Activated CD4-positive, alpha-beta T cell treated with anti-CD3 and anti-CD28 coated beads, Interleukin-2, amount 10 ng/mL, durations not matched to agents 7 days and 5 days (primary cell): ENCODE measurements at regions of chr1 and their contacts with region 1.

Region 1: GRCh38 chr1:42833981-42834380 is 12.4 kb upstream of the ZNF691 start:
- DNase-seq: no peak
- H3K4me3 Mint-ChIP-seq: no peak overlapping the region
- H3K27ac Mint-ChIP-seq: no peak overlapping the region
- H3K4me1 Mint-ChIP-seq: no peaks in the 10 kb centered on the region
- H3K27me3 Mint-ChIP-seq: no peaks in the 10 kb centered on the region

Region 2: DNA sequence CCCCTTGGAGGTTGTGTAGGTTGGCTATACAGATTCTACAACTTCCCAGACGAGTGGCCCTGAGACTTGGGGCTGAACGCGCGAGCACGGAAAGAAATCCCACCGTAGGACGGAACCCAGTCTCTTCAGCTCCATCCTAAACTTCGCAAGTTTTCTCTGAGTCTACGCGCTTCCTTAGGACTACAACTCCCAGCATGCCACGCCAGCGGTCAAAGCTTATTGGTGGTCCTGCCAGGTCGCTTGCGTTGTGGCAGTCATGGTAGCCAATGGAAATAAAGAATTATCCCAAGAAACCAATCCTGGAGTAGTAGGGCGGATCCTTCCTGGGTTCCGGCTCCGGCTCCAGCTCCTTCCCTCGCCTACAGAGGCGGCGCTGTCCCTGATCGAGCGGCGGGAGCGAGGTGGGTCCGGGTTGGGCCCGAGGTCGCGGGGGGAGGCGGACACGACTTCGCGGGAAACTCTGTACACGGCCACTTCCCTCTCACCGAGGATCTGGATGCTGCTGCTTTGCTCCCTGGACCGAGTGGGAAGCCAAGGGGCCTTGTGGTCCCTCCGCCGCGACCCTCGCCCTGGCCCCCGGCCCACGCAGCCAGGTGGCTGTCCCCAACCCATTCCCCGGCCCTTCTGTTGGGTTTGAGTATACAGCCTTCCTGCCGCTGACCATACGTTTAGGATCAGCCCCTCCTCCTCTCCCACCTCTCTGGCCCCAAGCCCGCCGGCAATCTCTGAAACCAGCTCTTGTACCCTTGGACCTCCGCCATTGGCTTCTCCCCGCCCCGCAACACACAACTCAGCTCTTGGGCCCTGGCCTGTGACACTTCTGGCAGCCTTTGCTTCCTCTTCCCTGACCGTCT is 12.5 kb after region 1 on chr1 and contains the start of gene ZNF691:
- CTCF ChIA-PET with region 1: interaction called, 17 read pairs
- POLR2A ChIA-PET with region 1: interaction called, 3 read pairs
- DNase-seq: peak; percentile 94
- H3K4me3 Mint-ChIP-seq: peak within 1 kb of the TSS; percentile 99
- H3K27ac Mint-ChIP-seq: peak within 1 kb of the TSS; percentile 90
- H3K4me1 Mint-ChIP-seq: peaks cover 33% of the 10 kb centered on the region
- H3K27me3 Mint-ChIP-seq: no peaks in the 10 kb centered on the region
- total RNA-seq, gene ZNF691: 10.8 to 11.0 TPM

Region 3: GRCh38 chr1:42962641-42963377 is 128.8 kb after region 1 on chr1:
- CTCF ChIA-PET with region 1: no interaction called
- POLR2A ChIA-PET with region 1: no interaction called
- DNase-seq: no peak
- H3K4me3 Mint-ChIP-seq: no peak overlapping the region
- H3K27ac Mint-ChIP-seq: no peak overlapping the region
- H3K4me1 Mint-ChIP-seq: peaks cover 38% of the 10 kb centered on the region
- H3K27me3 Mint-ChIP-seq: peaks cover 13% of the 10 kb centered on the region